Colonic mucosa (tissue), 4 donors: ENCODE measurements at regions of chr12 and their contacts with region 1.

Region 1: DNA sequence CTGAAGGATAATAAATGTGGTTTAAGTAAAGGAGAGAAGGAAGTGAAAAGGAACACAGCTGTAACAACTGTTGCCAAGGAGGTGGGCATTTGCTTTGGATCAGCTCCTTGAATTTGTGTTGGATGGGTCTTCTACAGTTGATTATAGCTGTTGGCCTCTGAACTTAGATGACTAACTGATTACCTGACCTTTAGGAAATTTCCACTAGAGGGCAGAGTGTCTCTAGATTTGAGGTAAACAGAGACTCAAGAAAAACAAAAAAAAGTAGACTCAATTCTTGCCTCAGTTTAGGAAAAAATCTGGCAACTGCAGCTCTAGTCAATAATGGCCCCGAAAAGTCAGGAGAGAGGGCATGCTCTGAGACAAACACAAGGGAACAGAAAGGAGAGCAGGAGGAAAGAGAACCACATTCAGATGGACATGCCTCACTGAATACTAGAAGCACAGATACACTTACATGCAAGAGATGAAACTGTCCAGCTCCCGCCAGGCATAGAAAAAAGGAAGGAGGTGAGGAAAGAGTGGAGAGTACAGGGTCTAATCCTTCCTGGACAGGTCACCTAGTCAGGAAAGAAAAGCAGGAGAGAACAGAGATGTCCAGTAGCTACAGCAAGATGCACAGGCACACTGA is 20.6 kb downstream of the COX14 start:
- DNase-seq: no peak
- H3K4me3 ChIP-seq: no peak overlapping the region
- H3K27ac ChIP-seq: no peak overlapping the region
- H3K4me1 ChIP-seq: no peaks in the 10 kb centered on the region
- H3K27me3 ChIP-seq: no peaks in the 10 kb centered on the region
- CTCF ChIP-seq: peak; percentile 59

Region 2: GRCh38 chr12:49945394-49946080 is 187.1 kb before region 1 on chr12:
- intact Hi-C with region 1: no loop called
- DNase-seq: peak; percentile 86
- H3K4me3 ChIP-seq: no peak overlapping the region
- H3K27ac ChIP-seq: peak overlapping the region; percentile 33
- H3K4me1 ChIP-seq: peaks cover 8% of the 10 kb centered on the region
- H3K27me3 ChIP-seq: no peaks in the 10 kb centered on the region
- CTCF ChIP-seq: peak; percentile 84

Region 3: DNA sequence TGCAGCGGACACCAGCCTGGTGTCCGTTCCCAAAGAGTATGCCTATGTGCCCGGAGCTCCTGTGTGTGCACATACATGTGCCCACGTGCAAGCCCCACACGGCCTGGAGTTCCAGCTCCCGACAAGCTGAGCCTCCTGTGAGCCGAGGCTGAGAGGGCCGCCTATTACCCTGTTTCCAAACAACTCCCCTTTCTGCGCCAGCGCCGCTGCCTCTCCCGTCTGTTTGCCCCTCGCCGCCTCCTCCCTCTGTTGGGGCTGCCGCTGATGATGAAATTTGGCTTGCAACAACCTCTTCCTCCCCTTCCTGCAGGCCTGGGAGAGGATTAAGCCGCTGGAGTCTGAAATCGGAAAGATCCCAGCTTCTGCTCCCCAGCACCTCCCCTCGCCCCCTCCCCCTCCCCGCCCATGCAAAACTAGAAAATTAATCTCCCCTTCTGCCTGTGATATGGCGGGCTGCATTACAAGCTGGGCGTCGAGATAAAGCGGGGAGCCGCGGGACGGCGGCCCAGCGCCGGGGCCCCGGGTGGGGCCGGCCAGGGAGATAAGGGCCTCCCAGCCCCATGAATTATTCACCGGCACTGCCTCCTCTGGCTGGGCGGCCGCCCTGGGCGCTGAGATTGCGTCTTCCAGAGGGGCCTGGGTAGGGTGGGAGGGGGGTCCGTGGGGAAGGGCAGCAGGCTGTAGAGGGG is 82.1 kb before region 1 on chr12:
- intact Hi-C with region 1: no loop called
- DNase-seq: peak; percentile 45
- H3K4me3 ChIP-seq: no peak overlapping the region
- H3K27ac ChIP-seq: no peak overlapping the region
- H3K4me1 ChIP-seq: no peaks in the 10 kb centered on the region
- H3K27me3 ChIP-seq: no peaks in the 10 kb centered on the region
- CTCF ChIP-seq: no peak

Region 4: DNA sequence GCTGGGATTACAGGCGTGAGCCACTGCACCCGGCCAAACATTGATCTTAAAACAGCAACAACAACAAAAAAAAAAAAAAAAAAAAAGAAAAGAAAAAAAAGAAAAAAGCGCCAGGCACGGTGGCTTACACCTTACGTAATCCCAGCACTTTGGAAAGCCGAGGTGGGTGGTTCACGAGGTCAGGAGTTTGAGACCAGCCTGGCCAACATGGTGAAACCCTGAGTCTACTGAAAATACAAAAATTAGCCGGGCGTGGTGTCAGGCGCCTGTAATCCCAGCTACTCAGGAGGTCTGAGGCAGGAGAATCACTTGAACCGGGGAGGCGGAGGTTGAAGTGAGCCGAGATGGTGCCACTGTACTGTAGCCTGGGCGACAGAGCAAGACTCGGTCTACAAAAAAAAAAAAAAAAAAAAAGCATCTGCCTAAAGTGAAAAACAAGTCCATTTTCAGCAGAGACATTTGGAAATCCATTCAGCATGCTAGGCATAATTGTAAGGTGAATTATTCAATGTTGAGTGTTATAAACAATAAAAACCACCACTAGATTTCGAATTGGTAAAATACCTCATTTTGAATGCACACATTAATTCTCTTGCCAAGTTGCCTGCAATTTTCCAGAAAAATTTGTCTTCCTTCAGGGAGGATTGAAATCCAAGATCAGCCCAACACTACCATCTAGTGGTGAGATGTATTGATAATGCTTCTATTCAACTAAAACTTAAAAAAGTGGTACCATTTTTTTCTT is 42.5 kb after region 1 on chr12:
- intact Hi-C with region 1: loop called (anchors 5 kb)
- DNase-seq: no peak
- H3K4me3 ChIP-seq: no peak overlapping the region
- H3K27ac ChIP-seq: no peak overlapping the region
- H3K4me1 ChIP-seq: no peaks in the 10 kb centered on the region
- H3K27me3 ChIP-seq: no peaks in the 10 kb centered on the region
- CTCF ChIP-seq: peak; percentile 47